Activated naive CD4-positive, alpha-beta T cell treated with anti-CD3 and anti-CD28 coated beads for 36 hours (primary cell): ENCODE measurements at regions of chr12 and their contacts with region 1.

Region 1: DNA sequence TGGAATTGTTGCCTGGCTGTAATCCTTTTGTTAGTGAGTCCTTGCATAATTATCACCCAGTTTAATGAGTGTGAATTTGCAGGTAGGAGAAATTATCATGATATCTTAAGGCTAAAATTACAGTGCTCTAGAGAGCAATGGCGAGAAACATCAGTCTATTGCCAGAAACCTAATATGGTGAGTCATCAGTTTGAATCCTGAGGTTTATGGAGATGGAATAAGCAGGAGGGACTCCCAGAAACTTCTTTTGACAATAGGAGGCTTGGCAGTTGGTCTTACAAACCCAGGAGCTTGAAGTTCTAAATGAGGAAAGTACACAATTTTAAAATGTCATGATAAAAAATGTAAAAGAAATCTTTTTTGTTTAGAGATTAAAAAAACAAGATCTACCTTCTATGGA is 31.5 kb upstream of the CRADD start:
- DNase-seq: no peak
- H3K4me3 Mint-ChIP-seq: no peak overlapping the region
- H3K27ac Mint-ChIP-seq: no peak overlapping the region
- H3K4me1 Mint-ChIP-seq: no peaks in the 10 kb centered on the region
- H3K27me3 Mint-ChIP-seq: no peaks in the 10 kb centered on the region

Region 2: DNA sequence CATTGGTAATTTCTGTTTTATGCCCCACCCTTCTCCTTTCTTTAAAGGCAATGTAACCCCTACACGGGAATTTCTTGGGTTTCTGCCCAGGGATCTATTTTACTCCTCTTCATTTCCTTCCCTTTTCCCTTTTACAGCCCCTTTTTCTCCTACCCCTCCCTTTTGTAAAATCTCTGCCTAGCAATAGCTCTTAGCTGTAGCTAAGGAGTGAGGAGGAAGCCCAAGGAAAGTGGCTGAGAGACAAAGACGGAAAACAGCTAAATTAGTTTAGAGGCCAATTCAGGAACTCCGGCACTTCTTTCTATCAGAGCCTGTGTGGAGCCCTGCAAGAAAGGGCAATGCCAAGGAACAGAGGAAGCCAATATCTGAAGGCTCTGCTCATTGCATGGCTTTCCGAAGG is 32.9 kb before region 1 on chr12:
- CTCF ChIA-PET with region 1: interaction called, 3 read pairs
- intact Hi-C with region 1: loop called (anchors 5 kb)
- DNase-seq: no peak
- H3K4me3 Mint-ChIP-seq: no peak overlapping the region
- H3K27ac Mint-ChIP-seq: no peak overlapping the region
- H3K4me1 Mint-ChIP-seq: no peaks in the 10 kb centered on the region
- H3K27me3 Mint-ChIP-seq: peaks cover 7% of the 10 kb centered on the region

Region 3: GRCh38 chr12:93663006-93663728 is 17.5 kb after region 1 on chr12:
- CTCF ChIA-PET with region 1: no interaction called
- intact Hi-C with region 1: no loop called
- DNase-seq: no peak
- H3K4me3 Mint-ChIP-seq: no peak overlapping the region
- H3K27ac Mint-ChIP-seq: no peak overlapping the region
- H3K4me1 Mint-ChIP-seq: no peaks in the 10 kb centered on the region
- H3K27me3 Mint-ChIP-seq: no peaks in the 10 kb centered on the region